Right ventricle myocardium inferior (tissue), 1 donor: ENCODE measurements at regions of chr10 and their contacts with region 1.

Region 1: DNA sequence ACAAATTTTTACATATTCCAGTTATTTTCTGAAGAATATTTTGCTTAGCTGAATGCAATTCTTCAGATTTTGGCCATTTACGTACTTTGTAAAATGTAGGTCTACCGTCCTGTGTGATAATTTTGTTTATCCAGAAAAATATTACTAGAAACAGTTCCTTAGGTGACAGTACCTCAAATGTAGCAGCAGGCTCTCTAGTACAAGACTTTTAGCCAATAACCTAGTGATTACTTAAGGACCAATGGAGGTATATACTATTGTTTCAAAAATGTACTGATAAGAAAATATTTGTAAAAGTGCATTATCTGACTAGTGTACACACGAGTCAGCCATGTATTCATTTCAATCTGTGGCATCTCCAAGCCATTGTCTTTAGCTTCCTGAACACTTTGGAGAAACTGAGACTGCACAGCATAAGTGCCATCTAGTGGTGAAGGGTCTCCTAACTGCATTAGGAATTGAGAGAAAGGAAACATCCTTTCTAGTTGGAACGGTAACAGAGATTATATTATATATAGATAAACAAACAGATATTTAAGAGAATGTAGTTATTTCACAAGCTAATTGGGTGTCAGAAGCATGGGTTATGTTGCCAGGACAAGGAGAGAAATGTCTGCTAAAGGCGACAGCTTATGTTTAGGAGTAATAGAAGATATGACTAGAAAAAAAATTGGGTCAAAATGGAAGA is 23.7 kb downstream of the RTKN2 start:
- DNase-seq: no peak
- ATAC-seq: peak; percentile 72

Region 2: GRCh38 chr10:61750929-61751471 is 493.9 kb before region 1 on chr10:
- intact Hi-C with region 1: loop called (anchors 5 kb)
- DNase-seq: peak; percentile 73
- ATAC-seq: peak; percentile 72

Region 3: DNA sequence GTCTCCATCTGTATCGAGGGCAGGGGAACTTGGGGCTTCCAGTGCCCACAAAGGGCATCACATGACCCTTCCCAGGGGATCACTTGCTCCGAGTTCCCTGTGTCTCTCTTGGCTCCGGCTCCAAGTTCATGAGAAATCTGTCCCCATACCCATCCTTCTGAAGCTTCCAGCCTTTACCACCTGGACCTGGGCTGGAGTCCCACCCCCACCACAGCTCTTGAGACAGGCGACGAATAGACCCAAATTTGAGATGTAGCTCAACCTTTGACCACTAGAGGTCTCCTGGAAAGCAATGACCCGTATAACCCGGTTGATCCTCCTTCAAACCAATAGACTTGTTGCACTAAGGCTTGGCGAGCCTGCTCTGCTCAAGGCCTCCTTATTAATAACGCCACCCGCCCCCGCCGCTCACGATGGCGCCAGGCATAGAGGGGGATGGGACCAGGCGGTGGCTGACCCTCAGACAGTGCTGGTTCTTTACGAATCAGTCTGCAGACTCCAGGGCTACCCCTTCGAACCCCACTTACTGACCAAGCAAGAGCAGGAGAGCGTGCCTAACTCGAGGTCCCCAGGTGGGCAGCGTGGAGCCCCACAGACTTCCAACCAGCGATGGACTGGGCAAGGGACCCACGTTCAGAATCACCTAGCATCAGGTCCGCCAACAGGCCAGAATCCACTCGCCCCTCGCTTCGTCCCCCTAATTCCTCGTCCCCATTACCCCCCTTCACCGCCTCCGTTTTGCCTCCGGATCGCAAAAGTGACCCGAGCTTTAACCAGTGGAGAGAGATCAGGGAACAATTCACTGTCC is 347.9 kb before region 1 on chr10:
- intact Hi-C with region 1: loop called (anchors 2 kb)
- DNase-seq: peak; percentile 86
- ATAC-seq: peak; percentile 86

Region 4: DNA sequence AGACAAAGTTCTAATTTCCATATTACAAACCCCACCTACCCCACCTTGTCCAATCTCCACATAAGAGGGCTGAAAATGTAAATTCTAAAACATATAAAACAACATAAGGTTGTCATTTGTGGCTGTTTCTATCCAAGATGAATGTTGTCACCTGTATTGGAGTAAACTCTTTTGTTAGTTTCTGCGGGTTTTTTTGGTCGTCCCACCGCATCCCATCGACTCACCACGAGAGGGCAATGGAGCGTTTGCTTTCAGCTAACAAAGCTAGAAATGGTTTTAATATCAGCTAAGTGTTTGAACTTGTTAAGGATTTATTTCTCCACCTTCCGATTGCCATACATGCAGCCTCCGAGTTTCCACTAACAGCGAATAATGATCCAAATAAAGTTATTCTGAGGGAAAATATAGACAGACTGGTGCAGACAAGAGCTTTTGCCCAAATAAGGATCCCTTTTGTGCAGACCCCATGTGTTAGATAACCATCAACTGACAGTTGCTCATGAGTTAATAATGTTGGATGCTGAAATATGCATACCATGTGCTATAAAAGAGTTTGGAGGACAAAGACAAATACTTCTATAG is 206.2 kb before region 1 on chr10:
- intact Hi-C with region 1: loop called (anchors 1 kb)
- DNase-seq: peak; percentile 72
- ATAC-seq: peak; percentile 68

Region 5: DNA sequence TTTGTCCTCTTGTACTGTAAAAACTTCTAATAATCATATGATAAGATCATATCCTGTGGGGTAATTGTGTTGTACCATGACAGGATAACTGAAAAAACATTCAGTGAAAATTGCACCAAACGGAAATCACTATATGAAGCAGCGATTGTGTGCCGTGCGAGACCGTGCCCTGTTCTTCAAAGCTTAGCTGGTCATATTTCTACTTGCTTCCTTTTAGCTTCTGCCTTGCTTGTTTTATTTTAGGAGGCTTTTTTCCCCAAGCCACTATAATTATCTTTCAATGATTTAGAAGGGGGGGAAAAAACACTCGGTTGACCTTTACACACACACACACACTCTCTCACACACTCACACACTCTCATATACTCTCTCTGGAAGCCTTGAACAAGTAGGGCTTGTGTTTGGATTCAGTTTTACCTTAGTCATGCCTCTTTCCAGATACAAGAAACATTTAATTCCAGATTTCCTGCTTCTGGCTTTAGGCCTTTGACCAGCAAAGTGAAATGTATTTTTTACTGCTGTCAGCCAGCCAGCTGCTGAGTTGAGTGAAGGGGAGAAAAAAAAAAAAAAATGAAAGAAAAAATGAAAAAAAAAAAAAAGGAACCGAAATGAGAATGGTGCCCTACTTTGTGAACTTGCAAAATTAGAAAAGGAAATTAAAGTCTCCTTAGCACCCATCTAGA is 162.1 kb before region 1 on chr10:
- intact Hi-C with region 1: loop called (anchors 5 kb)
- DNase-seq: no peak
- ATAC-seq: peak; percentile 50

Region 6: GRCh38 chr10:62384057-62384446 is 139.1 kb after region 1 on chr10:
- intact Hi-C with region 1: no loop called
- DNase-seq: no peak
- ATAC-seq: no peak